Posterior vena cava (tissue), 2 donors: ENCODE measurements at regions of chr13 and their contacts with region 1.

Region 1: DNA sequence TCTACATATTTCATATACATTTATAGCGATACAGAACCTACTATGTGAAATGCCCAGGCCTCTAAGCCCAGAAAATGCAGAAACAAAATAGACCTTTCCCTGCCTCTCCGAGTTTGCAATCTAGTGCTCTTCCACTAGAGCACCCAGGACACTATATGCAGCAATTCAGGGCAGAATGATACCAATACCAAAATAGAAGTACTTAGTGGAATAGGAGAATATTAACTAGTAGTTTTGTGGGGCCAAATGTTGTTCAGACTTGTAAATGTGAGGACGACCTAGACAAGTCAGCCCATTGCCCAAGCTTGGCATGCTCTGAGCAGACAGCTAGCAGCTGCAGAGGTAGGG is 35.8 kb upstream of the FLT1 start:
- DNase-seq: no peak

Region 2: DNA sequence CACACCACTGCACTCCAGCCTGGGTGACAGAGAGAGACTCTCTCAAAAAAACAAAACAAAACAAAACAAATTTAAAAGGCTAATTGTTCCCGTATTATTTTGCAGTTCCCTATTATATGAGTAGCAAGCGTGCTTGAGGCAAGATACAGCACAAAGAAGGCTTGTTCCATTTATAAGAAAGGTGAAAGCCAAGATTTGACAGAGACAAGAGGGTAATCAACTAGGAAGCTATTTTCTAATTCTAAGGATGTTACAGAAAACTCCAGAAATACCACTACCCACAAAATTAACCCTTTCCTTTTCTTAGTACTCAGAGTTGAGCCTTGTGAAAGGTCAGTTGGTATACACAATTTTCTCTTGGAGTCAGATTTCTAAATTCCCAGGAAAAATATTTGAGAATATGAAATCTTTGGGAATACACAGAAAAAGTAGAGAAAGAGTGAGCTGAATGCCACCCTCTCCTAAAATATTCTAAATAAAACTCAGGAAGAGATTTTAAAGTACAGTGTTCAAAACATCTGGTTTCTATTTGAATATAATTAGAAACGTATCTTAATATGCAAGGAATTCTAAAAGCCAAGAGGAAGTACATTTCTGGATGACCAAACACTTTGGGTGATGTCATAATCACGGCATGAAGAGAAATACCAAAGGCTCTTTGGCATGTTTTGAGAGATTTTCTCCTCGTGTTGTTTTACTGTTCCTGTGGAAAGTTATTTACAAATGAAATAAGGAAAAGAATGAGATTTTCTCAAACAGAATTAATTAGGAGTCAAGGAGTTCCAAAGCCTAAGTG is 27.2 kb after region 1 on chr13:
- intact Hi-C with region 1: loop called in 1 of 2 experiments (anchors 1 kb)
- DNase-seq: no peak